GM13976 (cell line): ENCODE measurements at regions of chr1 and their contacts with region 1.

Region 1: DNA sequence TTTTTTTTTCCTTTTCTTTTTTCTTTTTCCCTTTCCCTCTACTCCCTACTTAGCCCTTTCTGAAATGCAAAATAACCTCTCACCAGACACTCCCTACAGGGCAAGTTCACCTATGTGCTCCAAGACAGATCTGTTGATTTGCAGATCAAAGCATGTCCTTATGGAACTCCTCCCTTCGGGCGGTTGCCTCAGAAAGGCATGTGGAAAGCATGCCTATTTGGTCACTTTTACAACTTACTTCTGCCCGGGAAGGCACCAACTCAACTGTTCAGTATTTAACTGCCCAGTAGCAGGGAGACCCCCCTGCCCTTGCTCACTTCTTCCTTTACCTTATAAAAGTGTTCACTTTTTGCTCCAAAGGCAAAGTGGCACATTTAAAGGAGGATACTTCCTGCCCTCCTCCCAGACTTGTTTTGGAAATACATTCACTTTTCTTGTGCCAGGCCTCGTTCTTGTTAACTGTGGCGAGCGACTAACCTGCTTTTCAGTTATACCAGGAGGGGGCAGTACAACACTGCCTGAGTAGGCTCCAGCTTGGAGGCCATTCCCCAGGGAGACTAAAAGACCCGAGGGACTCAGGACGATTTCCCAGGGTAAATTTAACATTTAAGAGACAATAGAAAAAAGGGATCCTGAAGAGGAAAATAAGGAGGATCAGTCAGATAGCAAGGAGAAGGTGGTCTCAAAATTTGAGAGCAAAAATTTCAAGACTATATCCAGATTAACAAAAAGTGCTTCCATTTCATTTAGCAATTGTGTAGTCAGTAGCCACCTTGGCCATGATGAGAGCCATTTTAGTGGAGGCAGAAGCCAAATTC is 12.3 kb upstream of the SLAMF7 start:
- DNase-seq: peak; percentile 60
- CTCF ChIP-seq: peak; percentile 79

Region 2: GRCh38 chr1:160830321-160831153 is 103.8 kb after region 1 on chr1:
- in situ Hi-C with region 1: loop called (anchors 10 kb)
- DNase-seq: peak; percentile 60
- CTCF ChIP-seq: peak; percentile 64

Region 3: DNA sequence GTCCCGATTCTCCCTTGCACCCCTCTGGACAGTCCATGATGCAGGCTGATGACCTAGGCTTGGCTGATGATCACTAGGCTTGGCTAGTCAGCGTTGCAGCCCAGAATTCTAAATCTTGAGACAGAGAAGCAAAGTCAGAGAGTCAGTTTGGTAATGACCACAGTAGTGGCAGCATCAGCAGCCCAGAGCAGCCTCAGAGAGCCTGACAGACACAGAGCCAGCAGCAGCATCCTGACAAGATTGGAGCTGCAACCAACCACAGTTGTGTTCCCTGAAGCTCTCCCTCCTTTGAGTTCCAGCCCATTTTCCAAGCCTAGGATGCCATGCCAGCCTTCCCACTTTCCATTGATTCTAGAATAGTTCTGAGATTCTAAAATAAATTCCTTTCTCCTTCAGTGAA is 175.1 kb after region 1 on chr1:
- in situ Hi-C with region 1: no loop called
- DNase-seq: no peak
- CTCF ChIP-seq: no peak